Caki2 (cell line): ENCODE measurements at regions of chr9 and their contacts with region 1.

Region 1: GRCh38 chr9:101530077-101530711 is 3.5 kb upstream of the RNF20 start:
- DNase-seq: peak; percentile 45

Region 2: DNA sequence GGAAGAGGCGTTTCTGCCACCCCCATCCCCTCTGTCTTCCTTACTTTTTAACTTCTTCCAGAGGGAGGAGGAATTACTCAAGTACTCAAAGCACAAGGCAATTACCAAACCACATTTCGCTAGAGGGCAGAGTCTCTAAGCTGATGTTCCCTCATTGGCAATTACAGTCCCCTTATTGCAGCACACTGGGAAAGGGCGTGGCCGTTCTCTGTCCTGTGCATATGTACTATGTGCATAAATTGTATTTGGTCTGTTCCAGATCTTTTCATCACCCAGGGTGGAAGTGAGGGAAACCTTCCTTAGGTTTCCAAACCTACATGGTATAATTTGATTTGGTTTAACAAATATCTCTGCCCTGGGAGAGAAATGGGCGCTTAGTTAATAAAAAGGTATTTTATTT is 64.8 kb before region 1 on chr9:
- in situ Hi-C with region 1: loop called (anchors 5 kb)
- DNase-seq: peak; percentile 61

Region 3: GRCh38 chr9:101674165-101674564 is 144.0 kb after region 1 on chr9:
- in situ Hi-C with region 1: no loop called
- DNase-seq: no peak

Region 4: DNA sequence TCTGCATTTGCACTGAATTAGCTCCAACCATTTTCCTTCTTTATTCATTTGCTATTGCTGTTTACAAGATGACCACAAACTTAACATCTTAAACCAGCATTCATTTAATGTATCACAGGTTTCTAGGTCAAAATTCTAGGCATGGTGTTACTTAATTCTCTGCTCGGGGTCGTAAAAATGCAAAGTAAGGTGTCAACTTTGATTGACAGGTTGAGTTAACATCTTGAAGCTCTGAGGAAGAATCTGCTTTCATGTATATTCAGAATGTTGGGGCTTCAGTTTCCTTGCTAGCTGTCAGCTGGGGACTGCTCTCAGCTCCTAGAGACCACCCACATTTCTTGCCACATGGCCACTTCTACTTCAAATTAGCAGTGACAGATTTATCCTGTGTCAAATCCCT is 556.9 kb after region 1 on chr9:
- in situ Hi-C with region 1: no loop called
- DNase-seq: no peak